ENCODE measurements at regions of chr1 and their contacts with region 1.

Region 1: GRCh38 chr1:212035123-212035834 is at the starts of genes DTL and INTS7:
- DNase-seq: peak; percentile 100
- H3K4me3 Mint-ChIP-seq: peak within 1 kb of the TSS; percentile 98
- H3K27ac Mint-ChIP-seq: peak within 1 kb of the TSS; percentile 99
- H3K4me1 Mint-ChIP-seq: peaks cover 60% of the 10 kb centered on the region
- H3K27me3 Mint-ChIP-seq: peaks cover 3% of the 10 kb centered on the region
- total RNA-seq, gene DTL: 90.4 and 99.5 TPM in 2 replicates
- total RNA-seq, gene INTS7: 34.4 and 36.8 TPM in 2 replicates

Region 2: GRCh38 chr1:210989905-210990304 is 1045.4 kb before region 1 on chr1:
- intact Hi-C with region 1: no loop called
- DNase-seq: no peak
- H3K4me3 Mint-ChIP-seq: no peak overlapping the region
- H3K27ac Mint-ChIP-seq: no peak overlapping the region
- H3K4me1 Mint-ChIP-seq: no peaks in the 10 kb centered on the region
- H3K27me3 Mint-ChIP-seq: peaks cover 2% of the 10 kb centered on the region

Region 3: GRCh38 chr1:211578640-211579433 is 456.4 kb before region 1 on chr1 and contains the start of gene SLC30A1:
- intact Hi-C with region 1: loop called (anchors 5 kb)
- DNase-seq: peak; percentile 100
- H3K4me3 Mint-ChIP-seq: peak within 1 kb of the TSS; percentile 92
- H3K27ac Mint-ChIP-seq: peak within 1 kb of the TSS; percentile 87
- H3K4me1 Mint-ChIP-seq: peaks cover 33% of the 10 kb centered on the region
- H3K27me3 Mint-ChIP-seq: peaks cover 4% of the 10 kb centered on the region
- total RNA-seq, gene SLC30A1: 8.5 and 9.0 TPM in 2 replicates

Region 4: GRCh38 chr1:211680752-211681327 is 354.4 kb before region 1 on chr1:
- intact Hi-C with region 1: loop called (anchors 1 kb)
- DNase-seq: peak; percentile 91
- H3K4me3 Mint-ChIP-seq: peak overlapping the region; percentile 49
- H3K27ac Mint-ChIP-seq: peak overlapping the region; percentile 84
- H3K4me1 Mint-ChIP-seq: peaks cover 8% of the 10 kb centered on the region
- H3K27me3 Mint-ChIP-seq: peaks cover 7% of the 10 kb centered on the region

Region 5: GRCh38 chr1:211830330-211831142 is 204.7 kb before region 1 on chr1 and contains the start of gene LPGAT1:
- intact Hi-C with region 1: loop called (anchors 5 kb)
- DNase-seq: peak; percentile 91
- H3K4me3 Mint-ChIP-seq: peak within 1 kb of the TSS; percentile 91
- H3K27ac Mint-ChIP-seq: peak within 1 kb of the TSS; percentile 88
- H3K4me1 Mint-ChIP-seq: peaks cover 62% of the 10 kb centered on the region
- H3K27me3 Mint-ChIP-seq: no peaks in the 10 kb centered on the region
- total RNA-seq, gene LPGAT1: 35.6 and 42.1 TPM in 2 replicates

Region 6: GRCh38 chr1:212012034-212012740 is 23.1 kb before region 1 on chr1:
- intact Hi-C with region 1: loop called (anchors 1 kb)
- DNase-seq: peak; percentile 89
- H3K4me3 Mint-ChIP-seq: no peak overlapping the region
- H3K27ac Mint-ChIP-seq: no peak overlapping the region
- H3K4me1 Mint-ChIP-seq: peaks cover 3% of the 10 kb centered on the region
- H3K27me3 Mint-ChIP-seq: no peaks in the 10 kb centered on the region

Region 7: DNA sequence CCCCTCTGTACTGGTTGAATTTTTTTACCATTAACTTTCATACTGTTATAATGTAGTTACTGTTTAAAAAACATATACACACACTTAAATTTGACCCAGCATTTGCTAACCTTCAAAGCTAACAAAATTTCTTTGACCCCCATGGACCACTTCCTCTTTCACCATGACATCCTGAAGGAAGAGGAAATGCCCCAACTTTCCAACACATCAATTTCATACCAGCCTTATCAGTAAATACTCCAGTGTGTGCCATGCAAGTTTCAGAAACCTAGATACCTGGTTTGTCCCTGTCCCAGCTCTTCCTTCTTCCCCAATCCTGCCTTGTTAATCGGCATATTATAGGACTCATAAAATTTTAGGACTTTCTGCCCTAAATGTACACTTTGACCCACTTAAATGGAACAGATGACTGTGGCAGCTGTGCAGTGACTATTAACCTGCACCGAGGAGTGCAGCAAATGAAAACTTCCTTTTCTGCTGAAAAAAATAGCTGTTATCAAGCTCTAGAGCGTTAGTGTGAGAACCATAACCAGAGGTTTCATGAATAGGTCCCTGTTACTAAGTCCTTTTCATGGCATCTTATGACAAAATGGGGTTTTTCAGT is 54.4 kb after region 1 on chr1:
- intact Hi-C with region 1: no loop called
- DNase-seq: no peak
- H3K4me3 Mint-ChIP-seq: no peak overlapping the region
- H3K27ac Mint-ChIP-seq: peak overlapping the region; percentile 9
- H3K4me1 Mint-ChIP-seq: peaks cover 30% of the 10 kb centered on the region
- H3K27me3 Mint-ChIP-seq: no peaks in the 10 kb centered on the region

Region 8: GRCh38 chr1:212857992-212858460 is 822.7 kb after region 1 on chr1 and contains the start of gene FLVCR1:
- intact Hi-C with region 1: loop called (anchors 10 kb)
- DNase-seq: peak; percentile 99
- H3K4me3 Mint-ChIP-seq: no peak within 1 kb of the TSS
- H3K27ac Mint-ChIP-seq: peak within 1 kb of the TSS; percentile 97
- H3K4me1 Mint-ChIP-seq: peaks cover 19% of the 10 kb centered on the region
- H3K27me3 Mint-ChIP-seq: no peaks in the 10 kb centered on the region
- total RNA-seq, gene FLVCR1: 17.9 and 21.8 TPM in 2 replicates

Measured in activated CD4-positive, alpha-beta T cell treated with anti-CD3 and anti-CD28 coated beads, Interleukin-2, amount 10 ng/mL, durations not matched to agents 24 days and 14 days (primary cell).